ENCODE measurements at regions of chr12 and their contacts with region 1.

Region 1: DNA sequence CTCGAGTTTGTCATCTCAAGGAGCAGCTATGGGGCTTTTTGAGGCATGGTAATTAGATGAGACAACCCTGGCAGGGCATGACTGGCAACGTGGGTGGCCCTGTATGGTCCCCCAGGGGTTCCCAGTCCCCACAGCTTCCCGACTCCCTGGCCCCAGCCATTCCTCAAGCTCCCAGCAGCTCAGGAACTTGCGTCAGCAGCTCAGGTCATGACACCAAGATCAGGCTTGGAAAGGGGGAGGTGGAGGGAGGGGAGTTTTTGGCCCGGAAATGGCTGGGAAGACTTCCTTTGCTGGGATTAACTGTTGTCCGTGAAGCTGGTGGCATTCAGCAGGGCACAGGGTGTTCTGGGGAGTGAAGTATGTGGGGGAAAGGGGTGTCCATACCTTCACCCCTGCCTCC is 10.4 kb upstream of the NRIP2 start:
- DNase-seq: no peak
- H3K4me3 ChIP-seq: no peak overlapping the region
- H3K27ac ChIP-seq: peak overlapping the region; percentile 47
- H3K27me3 ChIP-seq: no peaks in the 10 kb centered on the region
- CTCF ChIP-seq: no peak

Region 2: GRCh38 chr12:2998789-2999264 is 153.5 kb after region 1 on chr12:
- CTCF ChIA-PET with region 1: no interaction called
- POLR2A ChIA-PET with region 1: no interaction called
- DNase-seq: peak; percentile 44
- H3K4me3 ChIP-seq: no peak overlapping the region
- H3K27ac ChIP-seq: peak overlapping the region; percentile 39
- H3K27me3 ChIP-seq: no peaks in the 10 kb centered on the region
- CTCF ChIP-seq: no peak

Region 3: DNA sequence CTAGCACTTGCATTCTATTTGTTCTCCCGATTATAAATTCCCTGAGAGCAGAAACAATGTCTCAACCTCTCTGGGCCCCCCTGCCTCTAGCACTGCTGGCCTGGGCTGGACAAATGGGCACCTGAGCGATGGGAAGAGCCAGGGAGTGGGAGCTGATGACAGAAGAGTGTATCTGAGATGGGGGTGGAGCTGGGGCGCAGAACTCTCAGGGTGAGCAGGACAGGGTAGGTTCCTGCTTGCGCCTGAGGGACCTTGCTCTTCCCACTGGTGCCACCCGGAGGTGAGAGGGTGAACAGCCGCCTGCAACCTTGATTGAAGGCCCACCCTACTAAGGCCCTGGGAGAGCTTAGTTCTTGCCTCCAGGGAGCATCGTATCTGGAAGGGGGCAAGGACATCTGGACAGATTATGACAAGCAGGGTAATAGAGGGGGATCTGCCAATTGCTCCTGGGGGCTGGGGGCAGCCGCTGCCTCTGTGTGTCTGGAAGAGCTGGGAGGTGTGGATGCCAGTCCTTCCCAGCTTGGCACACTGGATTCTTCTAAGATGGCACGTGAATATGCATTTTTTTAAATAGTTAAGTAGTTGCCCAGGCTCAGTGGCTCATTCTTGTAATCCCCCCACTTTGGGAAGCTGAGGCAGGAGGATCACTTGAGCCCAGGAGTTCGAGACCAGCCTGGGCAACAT is 188.9 kb after region 1 on chr12:
- CTCF ChIA-PET with region 1: interaction called, 11 read pairs
- POLR2A ChIA-PET with region 1: no interaction called
- DNase-seq: peak; percentile 44
- H3K4me3 ChIP-seq: no peak overlapping the region
- H3K27ac ChIP-seq: no peak overlapping the region
- H3K27me3 ChIP-seq: no peaks in the 10 kb centered on the region
- CTCF ChIP-seq: peak; percentile 88